OCI-LY7 (cell line): ENCODE measurements at regions of chr1 and their contacts with region 1.

Region 1: GRCh38 chr1:156625436-156626078 is 6.3 kb downstream of the HAPLN2 start:
- DNase-seq: peak; percentile 68
- H3K4me3 ChIP-seq: no peak overlapping the region
- H3K27ac ChIP-seq: no peak overlapping the region
- H3K4me1 ChIP-seq: peaks cover 23% of the 10 kb centered on the region
- CTCF ChIP-seq: peak; percentile 93

Region 2: GRCh38 chr1:156383023-156383422 is 242.5 kb before region 1 on chr1:
- CTCF ChIA-PET with region 1: no interaction called
- POLR2A ChIA-PET with region 1: no interaction called
- intact Hi-C with region 1: loop called (anchors 5 kb)
- DNase-seq: peak; percentile 71
- H3K4me3 ChIP-seq: no peak overlapping the region
- H3K27ac ChIP-seq: no peak overlapping the region
- H3K4me1 ChIP-seq: peaks cover 3% of the 10 kb centered on the region
- CTCF ChIP-seq: peak; percentile 86

Region 3: DNA sequence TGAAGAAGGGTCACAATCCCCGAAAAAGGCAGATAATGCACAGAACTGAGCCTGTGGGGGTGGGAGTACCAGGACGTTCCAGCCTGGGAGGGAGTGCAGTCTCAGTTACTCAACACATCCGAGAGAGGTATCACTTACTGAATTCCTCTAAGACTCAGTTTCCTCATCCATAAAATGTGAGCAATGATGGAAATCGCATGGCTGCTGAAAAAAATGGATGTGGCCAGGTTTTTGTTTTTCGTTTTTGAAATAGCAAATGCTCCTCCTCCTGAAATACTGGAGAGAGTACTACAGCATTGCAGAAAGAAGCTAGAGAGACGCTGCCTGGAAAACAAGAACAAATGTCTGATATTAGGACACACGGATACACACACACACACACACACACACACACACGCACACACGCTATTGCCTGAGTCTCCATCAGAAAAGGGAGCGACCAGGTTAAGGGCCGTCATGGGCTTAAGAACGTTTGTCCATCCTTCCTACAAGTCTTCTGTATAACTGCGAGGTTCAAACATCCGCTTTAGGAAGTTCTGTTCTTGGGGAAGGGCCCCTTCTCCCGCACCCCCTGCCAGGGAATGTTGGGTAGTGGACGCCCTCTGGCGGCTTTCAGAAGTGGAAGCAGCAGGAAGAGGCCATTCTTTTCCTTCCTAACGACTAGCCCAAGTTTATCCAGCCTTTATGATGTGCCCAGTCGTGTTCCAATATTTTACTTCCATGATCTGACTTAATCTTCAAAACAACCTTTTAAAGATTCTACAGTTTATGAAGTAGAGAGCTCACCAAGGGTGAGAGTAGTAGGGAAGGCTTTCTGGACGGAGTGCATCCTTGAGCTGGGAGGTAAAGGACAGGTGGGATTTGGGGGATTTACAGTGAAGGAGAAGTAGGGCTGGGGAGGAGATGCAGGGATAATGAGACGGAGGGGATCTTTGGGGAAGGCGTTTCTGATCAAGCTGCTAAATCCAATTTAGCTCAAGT is 52.3 kb after region 1 on chr1:
- CTCF ChIA-PET with region 1: interaction called, 3 read pairs
- POLR2A ChIA-PET with region 1: interaction called, 3 read pairs
- intact Hi-C with region 1: loop called (anchors 2 kb)
- DNase-seq: peak; percentile 56
- H3K4me3 ChIP-seq: no peak overlapping the region
- H3K27ac ChIP-seq: no peak overlapping the region
- H3K4me1 ChIP-seq: no peaks in the 10 kb centered on the region
- CTCF ChIP-seq: peak; percentile 97